Ovary (tissue), 10 donors: ENCODE measurements at regions of chr17 and their contacts with region 1.

Region 1: DNA sequence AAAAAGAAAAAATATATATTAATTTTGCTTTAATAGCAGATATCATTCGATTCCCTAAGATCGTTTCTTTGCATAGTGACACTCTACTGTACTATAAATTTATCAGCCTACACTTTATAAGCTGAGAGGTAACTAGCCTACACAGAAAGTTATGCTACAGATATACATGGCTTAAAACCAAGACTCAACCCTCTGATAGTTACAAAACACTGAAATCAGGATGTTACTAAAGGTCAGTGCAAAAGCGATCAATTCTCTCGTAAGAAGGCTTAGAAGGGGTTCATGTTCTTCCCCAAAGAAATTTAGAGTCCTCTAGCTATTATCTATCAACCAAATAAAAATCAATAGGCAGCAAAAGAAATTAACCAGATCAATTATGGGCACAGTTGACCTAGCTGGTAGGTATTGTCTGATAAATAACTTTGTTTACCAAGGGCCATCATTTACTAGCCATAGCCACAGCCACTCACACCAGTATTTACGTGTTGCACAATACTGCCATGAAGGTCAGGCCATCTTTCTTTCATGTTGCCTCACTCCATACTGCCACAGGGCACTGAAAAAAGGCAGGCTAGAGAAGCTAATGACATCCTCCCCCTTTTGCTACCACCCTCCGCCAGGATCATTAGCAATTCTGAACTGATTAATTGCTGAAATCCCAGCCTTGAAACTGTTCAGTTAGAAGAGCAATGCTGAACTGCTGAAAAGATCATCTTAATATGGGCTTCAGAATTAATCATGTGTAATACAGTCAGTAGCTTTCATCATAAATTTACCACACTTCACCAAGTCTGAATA is 43.7 kb downstream of the RND2 start:
- DNase-seq: no peak
- H3K4me3 ChIP-seq: no peak overlapping the region
- H3K27ac ChIP-seq: no peak overlapping the region
- H3K4me1 ChIP-seq: no peaks in the 10 kb centered on the region
- H3K27me3 ChIP-seq: no peaks in the 10 kb centered on the region
- CTCF ChIP-seq: no peak
- EP300 ChIP-seq: no peak
- POLR2A ChIP-seq: no peak

Region 2: GRCh38 chr17:43226393-43226792 is 157.6 kb after region 1 on chr17:
- intact Hi-C with region 1: loop called in 1 of 4 experiments (anchors 5 kb)
- DNase-seq: no peak
- H3K4me3 ChIP-seq: no peak overlapping the region
- H3K27ac ChIP-seq: no peak overlapping the region
- H3K4me1 ChIP-seq: no peaks in the 10 kb centered on the region
- H3K27me3 ChIP-seq: no peaks in the 10 kb centered on the region
- CTCF ChIP-seq: no peak
- EP300 ChIP-seq: no peak
- POLR2A ChIP-seq: no peak

Region 3: DNA sequence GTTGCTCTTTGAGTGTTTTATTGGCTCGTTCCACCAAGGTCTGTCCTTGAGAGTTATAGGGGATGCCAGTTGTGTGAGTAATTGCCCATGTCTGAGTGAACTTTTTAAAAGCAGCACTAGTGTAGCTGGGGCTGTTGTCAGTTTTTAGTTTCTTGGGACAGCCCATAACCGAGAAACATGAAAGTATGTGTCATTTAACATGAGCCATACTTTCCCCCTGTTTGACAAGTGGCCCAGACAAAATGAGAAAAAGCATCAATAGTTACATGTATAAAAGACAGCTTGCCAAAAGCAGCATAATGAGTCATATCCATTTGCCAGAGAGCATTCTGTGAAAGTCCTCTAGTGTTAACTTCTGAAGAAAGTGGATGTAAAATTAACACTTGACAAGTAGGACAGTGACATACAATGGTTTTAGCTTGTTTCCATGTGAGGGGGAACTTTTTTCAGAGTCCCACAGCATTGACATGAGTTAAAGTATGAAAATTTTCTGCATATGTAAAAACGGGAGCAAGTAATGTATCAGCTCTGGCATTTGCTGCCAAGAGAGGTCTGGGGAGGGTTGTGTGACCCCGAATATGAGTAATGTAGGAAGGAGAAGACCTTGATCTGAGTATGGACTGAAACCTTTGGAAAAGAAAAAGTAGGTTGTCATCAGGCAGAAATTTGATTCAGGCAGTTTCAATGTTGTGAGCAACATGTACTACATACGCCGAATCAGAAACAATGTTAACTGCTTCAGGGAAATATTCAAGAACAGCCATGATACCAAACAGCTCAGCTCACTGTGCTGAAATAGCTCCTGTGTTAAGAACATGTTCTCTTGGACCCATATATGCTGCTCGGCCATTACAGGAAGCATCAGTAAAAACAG is 273.2 kb after region 1 on chr17:
- intact Hi-C with region 1: loop called in 1 of 4 experiments (anchors 5 kb)
- DNase-seq: no peak
- H3K4me3 ChIP-seq: no peak overlapping the region
- H3K27ac ChIP-seq: peak overlapping the region in 1 of 2 donors; percentile 60
- H3K4me1 ChIP-seq: peaks cover 6% of the 10 kb centered on the region
- H3K27me3 ChIP-seq: no peaks in the 10 kb centered on the region
- CTCF ChIP-seq: no peak
- EP300 ChIP-seq: no peak
- POLR2A ChIP-seq: no peak